Endothelial cell of umbilical vein (primary cell): ENCODE measurements at regions of chr11 and their contacts with region 1.

Region 1: GRCh38 chr11:65027213-65028067 is at the start of gene SNX15:
- DNase-seq: peak; percentile 95
- H3K4me3 ChIP-seq: peak within 1 kb of the TSS; percentile 68 to 83 (median 74)
- H3K27ac ChIP-seq: peak within 1 kb of the TSS; percentile 61
- H3K4me1 ChIP-seq: peaks cover 11% of the 10 kb centered on the region
- H3K27me3 ChIP-seq: no peaks in the 10 kb centered on the region
- CTCF ChIP-seq: peak; percentile 38 to 84
- POLR2A ChIP-seq: peak; percentile 81
- total RNA-seq, gene SNX15: 21.0 and 21.8 TPM in 2 replicates

Region 2: DNA sequence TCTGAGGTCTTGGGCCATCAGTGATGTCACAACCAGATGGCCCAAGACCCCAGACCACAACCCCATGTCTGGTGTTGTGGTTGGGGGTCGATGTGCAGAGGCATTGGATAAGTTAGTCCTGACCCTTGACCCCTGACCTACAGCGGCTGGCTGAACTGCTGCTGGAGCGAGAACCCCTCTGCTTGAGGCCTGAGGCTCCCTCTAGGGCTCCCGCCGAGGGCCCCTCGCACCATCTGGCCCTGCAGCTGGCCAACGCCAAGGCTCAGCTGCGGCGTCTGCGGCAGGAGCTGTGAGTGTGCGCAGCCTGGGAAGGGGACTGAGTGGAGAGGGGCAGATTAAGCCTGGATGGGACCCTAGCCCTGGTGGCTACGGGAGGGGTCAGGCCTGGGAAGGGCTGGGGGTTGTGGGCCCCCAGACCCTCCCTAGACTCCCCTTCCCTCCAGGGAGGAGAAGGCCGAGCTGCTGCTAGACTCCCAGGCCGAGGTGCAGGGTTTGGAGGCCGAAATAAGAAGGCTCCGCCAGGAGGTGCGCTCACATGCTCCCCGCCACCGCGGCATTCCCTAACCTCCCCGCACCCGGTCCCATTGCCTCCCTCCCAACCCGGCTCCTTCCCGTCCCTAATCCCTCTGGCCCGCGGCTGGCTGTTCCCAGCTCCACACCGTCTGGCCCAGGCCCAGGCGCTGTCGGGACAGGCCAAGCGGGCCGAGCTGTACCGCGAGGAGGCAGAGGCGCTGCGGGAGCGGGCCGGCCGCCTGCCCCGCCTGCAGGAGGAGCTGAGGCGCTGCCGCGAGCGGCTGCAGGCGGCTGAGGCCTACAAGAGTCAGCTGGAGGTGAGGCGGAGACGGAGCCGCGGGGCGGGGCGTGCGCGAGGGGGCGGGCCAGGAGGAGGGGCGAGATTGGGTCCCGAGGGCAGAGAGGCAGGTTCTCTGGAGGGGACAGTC is 685.3 kb before region 1 on chr11:
- CTCF ChIA-PET with region 1: no interaction called
- POLR2A ChIA-PET with region 1: no interaction called
- dilution Hi-C with region 1: no loop called
- intact Hi-C with region 1: no loop called
- DNase-seq: peak; percentile 87
- H3K4me3 ChIP-seq: peak overlapping the region in 1 of 3 experiments; percentile 16
- H3K27ac ChIP-seq: no peak overlapping the region
- H3K4me1 ChIP-seq: no peaks in the 10 kb centered on the region
- H3K27me3 ChIP-seq: no peaks in the 10 kb centered on the region
- CTCF ChIP-seq: peak; percentile 34 to 62
- POLR2A ChIP-seq: no peak

Region 3: GRCh38 chr11:64916775-64917662 is 110.4 kb before region 1 on chr11 and contains the start of gene ATG2A:
- CTCF ChIA-PET with region 1: interaction called, 4 read pairs
- POLR2A ChIA-PET with region 1: no interaction called
- dilution Hi-C with region 1: no loop called
- intact Hi-C with region 1: loop called (anchors 1 kb)
- DNase-seq: peak; percentile 100
- H3K4me3 ChIP-seq: peak within 1 kb of the TSS; percentile 10 to 86 (median 72)
- H3K27ac ChIP-seq: peak within 1 kb of the TSS; percentile 49
- H3K4me1 ChIP-seq: peaks cover 11% of the 10 kb centered on the region
- H3K27me3 ChIP-seq: no peaks in the 10 kb centered on the region
- CTCF ChIP-seq: no peak
- POLR2A ChIP-seq: peak; percentile 79
- total RNA-seq, gene ATG2A: 24.3 and 27.4 TPM in 2 replicates

Region 4: DNA sequence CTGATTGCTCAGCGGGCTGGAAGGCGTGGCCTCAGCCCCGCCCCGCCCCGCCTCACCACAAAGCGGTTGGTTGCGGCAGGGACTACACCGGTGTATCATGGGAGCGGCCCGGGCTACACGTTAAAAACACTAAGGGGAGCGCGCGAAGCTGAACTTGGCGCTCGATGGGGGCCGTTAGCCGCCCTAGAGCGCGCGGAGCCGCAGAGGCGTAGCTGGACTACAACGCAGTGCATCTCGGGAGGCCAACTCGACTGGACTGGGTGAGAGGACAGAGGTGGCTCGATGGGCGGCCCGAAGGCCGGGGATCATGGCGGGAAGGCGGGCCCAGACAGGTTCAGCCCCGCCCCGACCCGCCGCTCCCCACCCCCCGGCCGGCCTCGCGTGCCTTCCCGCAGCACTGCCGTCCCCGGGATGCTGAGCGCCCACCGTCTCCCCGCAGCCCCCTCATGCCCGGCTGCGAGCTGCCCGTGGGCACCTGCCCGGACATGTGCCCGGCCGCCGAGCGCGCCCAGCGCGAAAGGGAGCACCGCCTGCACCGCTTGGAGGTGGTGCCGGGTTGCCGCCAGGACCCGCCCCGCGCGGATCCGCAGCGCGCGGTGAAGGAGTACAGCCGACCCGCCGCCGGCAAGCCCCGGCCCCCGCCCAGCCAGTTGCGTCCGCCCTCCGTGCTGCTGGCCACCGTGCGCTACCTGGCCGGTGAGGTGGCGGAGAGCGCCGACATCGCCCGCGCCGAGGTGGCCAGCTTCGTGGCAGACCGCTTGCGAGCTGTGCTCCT is 13.6 kb after region 1 on chr11 and contains the start of gene SAC3D1:
- CTCF ChIA-PET with region 1: interaction called, 7 read pairs
- POLR2A ChIA-PET with region 1: no interaction called
- dilution Hi-C with region 1: no loop called
- intact Hi-C with region 1: loop called (anchors 1 kb)
- DNase-seq: peak; percentile 92
- H3K4me3 ChIP-seq: peak within 1 kb of the TSS; percentile 44 to 62 (median 58)
- H3K27ac ChIP-seq: peak within 1 kb of the TSS; percentile 66
- H3K4me1 ChIP-seq: peaks cover 9% of the 10 kb centered on the region
- H3K27me3 ChIP-seq: no peaks in the 10 kb centered on the region
- CTCF ChIP-seq: no peak
- POLR2A ChIP-seq: peak; percentile 67
- total RNA-seq, gene SAC3D1: 16.6 and 18.0 TPM in 2 replicates

Region 5: GRCh38 chr11:65060913-65061408 is 33.5 kb after region 1 on chr11:
- CTCF ChIA-PET with region 1: no interaction called
- POLR2A ChIA-PET with region 1: no interaction called
- dilution Hi-C with region 1: no loop called
- intact Hi-C with region 1: loop called (anchors 1 kb)
- DNase-seq: peak; percentile 28
- H3K4me3 ChIP-seq: no peak overlapping the region
- H3K27ac ChIP-seq: no peak overlapping the region
- H3K4me1 ChIP-seq: no peaks in the 10 kb centered on the region
- H3K27me3 ChIP-seq: no peaks in the 10 kb centered on the region
- CTCF ChIP-seq: peak; percentile 40 to 50
- POLR2A ChIP-seq: no peak

Region 6: GRCh38 chr11:65078151-65078550 is 50.7 kb after region 1 on chr11:
- CTCF ChIA-PET with region 1: no interaction called
- POLR2A ChIA-PET with region 1: no interaction called
- dilution Hi-C with region 1: no loop called
- intact Hi-C with region 1: loop called (anchors 1 kb)
- DNase-seq: peak; percentile 22
- H3K4me3 ChIP-seq: no peak overlapping the region
- H3K27ac ChIP-seq: no peak overlapping the region
- H3K4me1 ChIP-seq: peaks cover 6% of the 10 kb centered on the region
- H3K27me3 ChIP-seq: no peaks in the 10 kb centered on the region
- CTCF ChIP-seq: peak; percentile 51 to 67
- POLR2A ChIP-seq: no peak

Region 7: GRCh38 chr11:65095974-65096806 is 68.8 kb after region 1 on chr11 and contains the start of gene VPS51:
- CTCF ChIA-PET with region 1: no interaction called
- POLR2A ChIA-PET with region 1: no interaction called
- dilution Hi-C with region 1: no loop called
- intact Hi-C with region 1: loop called (anchors 1 kb)
- DNase-seq: peak; percentile 76
- H3K4me3 ChIP-seq: peak within 1 kb of the TSS; percentile 55 to 62 (median 56)
- H3K27ac ChIP-seq: peak within 1 kb of the TSS; percentile 46
- H3K4me1 ChIP-seq: peaks cover 6% of the 10 kb centered on the region
- H3K27me3 ChIP-seq: no peaks in the 10 kb centered on the region
- CTCF ChIP-seq: no peak
- POLR2A ChIP-seq: peak; percentile 94
- total RNA-seq, gene VPS51: 102 and 108 TPM in 2 replicates

Region 8: DNA sequence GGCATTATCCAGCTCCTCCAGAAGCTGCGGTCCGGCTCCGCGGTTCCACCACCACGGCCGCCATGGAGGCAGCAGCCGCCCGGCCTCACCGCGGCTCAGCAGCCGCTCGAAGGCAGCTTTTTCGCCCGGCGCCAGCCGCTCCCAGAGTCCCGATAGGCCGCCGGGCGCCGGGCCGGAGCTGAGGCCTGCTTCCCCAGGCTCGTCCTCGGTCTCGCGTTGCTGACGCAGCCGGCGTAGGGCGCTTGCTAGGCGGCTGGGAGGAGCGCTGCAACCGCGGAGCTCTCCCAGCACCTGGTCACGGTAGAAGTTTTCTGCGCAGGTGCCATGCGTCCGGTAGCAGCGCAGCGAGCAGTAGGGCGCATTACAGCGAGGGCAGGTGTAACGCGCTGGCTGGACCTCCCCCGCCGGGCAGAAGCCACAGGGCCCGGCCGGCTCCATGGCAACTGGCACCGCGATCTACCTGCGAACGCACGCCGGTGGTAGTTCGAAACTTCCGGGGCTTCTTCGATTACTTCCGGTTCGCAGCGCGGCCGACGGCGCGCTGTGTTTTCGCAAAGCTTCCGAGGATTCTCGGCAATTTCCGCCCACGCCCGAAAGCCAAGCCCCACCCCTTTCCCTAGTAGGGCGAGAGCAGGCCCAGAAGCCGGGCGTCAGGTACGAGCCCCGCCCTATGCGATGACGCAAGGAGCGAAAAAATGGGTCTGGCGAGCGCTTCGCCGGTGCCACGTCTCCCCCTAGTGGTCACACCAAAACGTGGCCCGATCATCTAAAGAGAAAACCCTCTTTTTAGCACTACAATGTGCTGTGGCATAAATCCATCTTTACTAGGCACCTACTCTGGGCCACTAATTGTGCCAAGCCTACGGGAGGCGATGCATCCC is 90.0 kb after region 1 on chr11 and contains the start of gene ZNHIT2:
- CTCF ChIA-PET with region 1: no interaction called
- POLR2A ChIA-PET with region 1: no interaction called
- dilution Hi-C with region 1: no loop called
- intact Hi-C with region 1: loop called (anchors 1 kb)
- DNase-seq: peak; percentile 99
- H3K4me3 ChIP-seq: peak within 1 kb of the TSS; percentile 24 to 75 (median 46)
- H3K27ac ChIP-seq: peak within 1 kb of the TSS; percentile 9
- H3K4me1 ChIP-seq: peaks cover 21% of the 10 kb centered on the region
- H3K27me3 ChIP-seq: no peaks in the 10 kb centered on the region
- CTCF ChIP-seq: peak; percentile 89 to 91
- POLR2A ChIP-seq: peak; percentile 85
- total RNA-seq, gene ZNHIT2: 9.0 and 9.2 TPM in 2 replicates